HEK293 (cell line): ENCODE measurements at regions of chr4 and their contacts with region 1.

Region 1: DNA sequence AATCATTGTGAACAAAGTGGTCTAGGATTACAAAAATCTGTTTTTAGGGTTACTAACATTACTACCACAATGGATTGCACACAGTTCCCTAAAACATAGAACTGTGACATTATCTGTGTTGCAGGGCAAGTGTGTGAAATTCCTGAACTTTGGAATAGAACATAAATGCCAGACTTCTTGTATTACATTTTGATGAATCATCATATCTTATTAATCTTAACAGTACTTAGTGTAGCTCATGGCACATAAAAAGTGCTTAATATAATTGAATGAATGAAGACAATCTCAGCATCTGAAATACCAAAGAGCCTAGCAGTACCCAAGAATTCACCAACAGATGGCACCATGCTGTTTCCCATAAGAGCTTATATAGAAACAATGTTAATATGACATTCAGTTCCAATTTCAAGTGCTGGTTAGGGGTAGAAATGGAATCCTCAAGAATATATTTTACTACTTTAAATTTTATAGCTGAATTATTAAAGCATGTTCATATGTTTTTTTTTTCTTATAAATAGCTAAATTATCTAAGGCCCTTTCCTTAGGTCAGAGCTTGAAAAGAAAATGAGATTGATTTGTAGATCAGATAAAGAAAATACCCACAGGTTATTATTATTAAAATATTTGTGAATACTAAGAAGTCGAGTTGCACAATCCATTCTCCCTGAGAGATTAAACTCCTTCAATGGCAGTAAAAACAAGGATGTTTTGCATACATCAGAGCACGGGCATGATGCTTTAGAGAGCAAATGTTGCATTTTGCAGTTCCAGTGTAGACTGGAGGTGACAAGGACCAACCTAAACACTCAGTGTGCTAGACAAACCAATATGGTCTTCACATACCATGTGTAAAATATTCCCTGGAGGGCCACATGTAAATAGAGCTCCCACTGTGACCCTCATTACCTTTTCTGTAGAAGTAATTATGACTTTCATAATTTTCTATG is 25.7 kb upstream of the SHISA3 start:
- H3K4me3 ChIP-seq: no peak overlapping the region
- H3K27ac ChIP-seq: no peak overlapping the region
- H3K4me1 ChIP-seq: no peaks in the 10 kb centered on the region
- CTCF ChIP-seq: 0 out of 2 replicates have a peak, but pooled peaks have one; percentile 22

Region 2: GRCh38 chr4:42282081-42282901 is 89.3 kb before region 1 on chr4:
- CTCF ChIA-PET with region 1: interaction called, 13 read pairs
- POLR2A ChIA-PET with region 1: no interaction called
- H3K4me3 ChIP-seq: no peak overlapping the region
- H3K27ac ChIP-seq: no peak overlapping the region
- H3K4me1 ChIP-seq: no peaks in the 10 kb centered on the region
- CTCF ChIP-seq: peak; percentile 32; the same call in 1 of the 2 replicates

Region 3: GRCh38 chr4:42512226-42512625 is 140.6 kb after region 1 on chr4:
- CTCF ChIA-PET with region 1: interaction called, 69 read pairs
- POLR2A ChIA-PET with region 1: no interaction called
- H3K4me3 ChIP-seq: no peak overlapping the region
- H3K27ac ChIP-seq: no peak overlapping the region
- H3K4me1 ChIP-seq: no peaks in the 10 kb centered on the region
- CTCF ChIP-seq: no peak

Region 4: GRCh38 chr4:42519803-42520417 is 148.3 kb after region 1 on chr4:
- CTCF ChIA-PET with region 1: interaction called, 69 read pairs
- POLR2A ChIA-PET with region 1: no interaction called
- H3K4me3 ChIP-seq: no peak overlapping the region
- H3K27ac ChIP-seq: no peak overlapping the region
- H3K4me1 ChIP-seq: no peaks in the 10 kb centered on the region
- CTCF ChIP-seq: no peak